SK-N-SH (cell line): ENCODE measurements at regions of chr7 and their contacts with region 1.

Region 1: GRCh38 chr7:76020031-76020714 is 25.8 kb upstream of the TMEM120A start:
- DNase-seq: peak; percentile 85
- H3K4me3 ChIP-seq: no peak overlapping the region
- H3K27ac ChIP-seq: no peak overlapping the region
- H3K4me1 ChIP-seq: no peaks in the 10 kb centered on the region
- H3K27me3 ChIP-seq: no peaks in the 10 kb centered on the region
- CTCF ChIP-seq: peak; percentile 99
- EP300 ChIP-seq: no peak
- RAD21 ChIP-seq: peak; percentile 99

Region 2: GRCh38 chr7:75861636-75862035 is 158.5 kb before region 1 on chr7:
- CTCF ChIA-PET with region 1: interaction called, 305 read pairs
- POLR2A ChIA-PET with region 1: interaction called, 13 read pairs
- DNase-seq: no peak
- H3K4me3 ChIP-seq: no peak overlapping the region
- H3K27ac ChIP-seq: no peak overlapping the region
- H3K4me1 ChIP-seq: peaks cover 3% of the 10 kb centered on the region in 2 experiments; a peak in 1 of 4 replicates
- H3K27me3 ChIP-seq: no peaks in the 10 kb centered on the region; the same call in 1 of the 2 replicates
- CTCF ChIP-seq: no peak
- EP300 ChIP-seq: no peak
- RAD21 ChIP-seq: no peak

Region 3: DNA sequence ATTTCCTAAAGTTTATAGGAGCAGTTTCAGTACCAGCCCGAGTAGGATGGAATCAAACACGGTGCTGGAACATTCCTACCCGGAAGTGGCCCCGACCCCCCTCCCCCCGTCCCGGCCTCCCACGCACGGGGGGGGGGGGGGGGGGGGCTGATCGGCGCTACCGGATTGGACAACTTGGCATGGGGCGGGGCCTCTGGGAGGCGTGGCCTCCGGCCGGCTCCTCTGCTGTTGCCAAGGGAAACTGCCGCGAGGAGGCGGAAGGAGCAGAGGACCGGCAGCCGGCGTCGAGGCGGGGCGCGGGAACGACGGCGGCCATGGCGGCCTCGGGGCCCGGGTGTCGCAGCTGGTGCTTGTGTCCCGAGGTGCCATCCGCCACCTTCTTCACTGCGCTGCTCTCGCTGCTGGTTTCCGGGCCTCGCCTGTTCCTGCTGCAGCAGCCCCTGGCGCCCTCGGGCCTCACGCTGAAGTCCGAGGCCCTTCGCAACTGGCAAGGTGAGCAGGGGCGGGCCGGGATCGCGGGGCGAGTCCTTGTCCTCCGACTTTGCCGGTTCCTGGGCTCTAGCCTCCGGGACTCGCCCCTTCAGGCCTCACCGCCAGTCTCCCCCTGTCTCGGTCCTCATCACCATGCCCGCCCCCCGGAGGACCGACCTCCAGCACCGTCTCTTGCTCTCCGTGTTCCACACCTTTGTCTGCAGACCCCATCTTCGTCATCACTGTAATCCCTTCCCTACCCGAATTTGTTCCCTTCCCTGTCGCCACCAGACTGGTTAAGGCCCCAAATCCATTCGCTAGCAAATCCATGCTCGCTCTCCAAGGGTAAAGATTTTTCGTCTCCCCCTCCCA is 141.2 kb before region 1 on chr7 and contains the start of gene RHBDD2:
- CTCF ChIA-PET with region 1: interaction called, 32 read pairs
- POLR2A ChIA-PET with region 1: no interaction called
- DNase-seq: peak; percentile 100
- H3K4me3 ChIP-seq: peak within 1 kb of the TSS; percentile 73 to 88
- H3K27ac ChIP-seq: peak within 1 kb of the TSS; percentile 65 to 91
- H3K4me1 ChIP-seq: peaks cover 6 to 10% of the 10 kb centered on the region in 2 experiments; a peak in 3 of 4 replicates
- H3K27me3 ChIP-seq: no peaks in the 10 kb centered on the region
- CTCF ChIP-seq: no peak
- EP300 ChIP-seq: peak in 1 of 2 experiments; percentile 58; a peak in 2 of 4 replicates
- RAD21 ChIP-seq: peak; percentile 18; the same call in 1 of the 2 replicates
- polyA plus RNA-seq, gene RHBDD2: 68.8 and 77.6 TPM in 2 replicates

Region 4: GRCh38 chr7:75914730-75915585 is 105.2 kb before region 1 on chr7 and contains the start of gene POR:
- CTCF ChIA-PET with region 1: interaction called, 15 read pairs
- POLR2A ChIA-PET with region 1: interaction called, 6 read pairs
- DNase-seq: peak; percentile 100
- H3K4me3 ChIP-seq: peak within 1 kb of the TSS; percentile 74 to 93
- H3K27ac ChIP-seq: peak within 1 kb of the TSS; percentile 57 to 79
- H3K4me1 ChIP-seq: peaks cover 5 to 10% of the 10 kb centered on the region in 2 experiments; a peak in 2 of 4 replicates
- H3K27me3 ChIP-seq: no peaks in the 10 kb centered on the region
- CTCF ChIP-seq: no peak; the same call in 1 of the 2 replicates
- EP300 ChIP-seq: peak; percentile 38 to 86; a peak in 1 of 4 replicates
- RAD21 ChIP-seq: no peak
- polyA plus RNA-seq, gene POR: 55.8 and 68.7 TPM in 2 replicates

Region 5: DNA sequence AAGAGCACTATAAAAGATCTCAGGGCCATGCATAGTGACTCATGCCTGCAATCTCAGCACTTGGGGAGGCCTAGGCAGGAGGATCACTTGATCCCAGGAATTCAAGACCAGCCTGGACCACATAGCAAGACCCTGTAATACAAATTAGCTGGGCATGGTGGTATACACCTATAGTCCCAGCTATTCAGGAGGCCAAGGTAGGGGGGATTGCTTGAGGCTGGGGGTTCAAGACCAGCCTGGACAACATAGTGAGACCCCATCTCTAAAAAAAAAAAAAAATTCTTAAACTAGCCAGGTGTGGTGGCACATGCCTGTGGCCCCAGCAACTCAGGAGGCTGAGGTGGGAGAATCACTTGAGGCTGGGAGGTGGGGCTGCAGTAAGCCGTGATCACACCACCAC is 11.8 kb after region 1 on chr7:
- CTCF ChIA-PET with region 1: interaction called, 70 read pairs
- POLR2A ChIA-PET with region 1: no interaction called
- DNase-seq: no peak
- H3K4me3 ChIP-seq: no peak overlapping the region
- H3K27ac ChIP-seq: no peak overlapping the region
- H3K4me1 ChIP-seq: no peaks in the 10 kb centered on the region; a peak in 1 of 4 replicates
- H3K27me3 ChIP-seq: no peaks in the 10 kb centered on the region
- CTCF ChIP-seq: no peak
- EP300 ChIP-seq: no peak
- RAD21 ChIP-seq: no peak

Region 6: GRCh38 chr7:76352193-76352592 is 332.0 kb after region 1 on chr7:
- CTCF ChIA-PET with region 1: no interaction called
- POLR2A ChIA-PET with region 1: no interaction called
- DNase-seq: no peak
- H3K4me3 ChIP-seq: no peak overlapping the region
- H3K27ac ChIP-seq: no peak overlapping the region
- H3K4me1 ChIP-seq: peaks cover 17 to 21% of the 10 kb centered on the region in 2 experiments; a peak in 3 of 4 replicates
- H3K27me3 ChIP-seq: no peaks in the 10 kb centered on the region
- CTCF ChIP-seq: no peak
- EP300 ChIP-seq: no peak
- RAD21 ChIP-seq: no peak